ENCODE measurements at regions of chrX and their contacts with region 1.

Region 1: GRCh38 chrX:10496345-10496965 is 123.9 kb downstream of the MID1 start:
- DNase-seq: peak; percentile 91
- H3K4me3 ChIP-seq: no peak overlapping the region
- H3K27ac ChIP-seq: peak overlapping the region; percentile 84
- H3K4me1 ChIP-seq: peaks cover 15% of the 10 kb centered on the region
- H3K27me3 ChIP-seq: no peaks in the 10 kb centered on the region
- CTCF ChIP-seq: no peak
- POLR2A ChIP-seq: no peak

Region 2: GRCh38 chrX:10579112-10580011 is 82.9 kb after region 1 on chrX:
- CTCF ChIA-PET with region 1: no interaction called
- POLR2A ChIA-PET with region 1: no interaction called
- dilution Hi-C with region 1: no loop called
- intact Hi-C with region 1: loop called (anchors 5 kb)
- DNase-seq: peak; percentile 84
- H3K4me3 ChIP-seq: peak overlapping the region in 1 of 3 experiments; percentile 59
- H3K27ac ChIP-seq: peak overlapping the region; percentile 99
- H3K4me1 ChIP-seq: peaks cover 58% of the 10 kb centered on the region
- H3K27me3 ChIP-seq: no peaks in the 10 kb centered on the region
- CTCF ChIP-seq: no peak
- POLR2A ChIP-seq: no peak

Region 3: DNA sequence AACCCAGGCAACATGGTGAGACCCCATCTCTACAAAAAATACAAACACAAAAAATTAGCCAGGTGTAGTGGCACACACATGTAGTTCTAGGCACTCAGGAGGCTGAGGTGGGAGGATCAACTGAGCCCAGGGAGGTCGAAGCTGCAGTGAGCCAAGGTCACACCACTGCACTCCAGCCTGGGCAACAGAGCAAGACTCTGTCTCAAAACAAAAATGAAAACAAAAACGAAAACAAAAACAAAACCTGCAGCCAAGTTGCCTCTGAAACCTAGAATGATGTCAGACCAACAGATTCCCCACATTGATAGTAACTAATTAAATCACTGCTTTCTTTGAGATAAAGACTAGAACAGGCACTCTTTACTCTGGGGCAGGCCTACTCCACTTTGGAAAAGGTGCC is 901.2 kb after region 1 on chrX:
- CTCF ChIA-PET with region 1: no interaction called
- POLR2A ChIA-PET with region 1: no interaction called
- dilution Hi-C with region 1: no loop called
- intact Hi-C with region 1: no loop called
- DNase-seq: no peak
- H3K4me3 ChIP-seq: no peak overlapping the region
- H3K27ac ChIP-seq: no peak overlapping the region
- H3K4me1 ChIP-seq: no peaks in the 10 kb centered on the region
- H3K27me3 ChIP-seq: no peaks in the 10 kb centered on the region
- CTCF ChIP-seq: no peak
- POLR2A ChIP-seq: no peak